HepG2 (cell line): ENCODE measurements at regions of chr16 and their contacts with region 1.

Region 1: DNA sequence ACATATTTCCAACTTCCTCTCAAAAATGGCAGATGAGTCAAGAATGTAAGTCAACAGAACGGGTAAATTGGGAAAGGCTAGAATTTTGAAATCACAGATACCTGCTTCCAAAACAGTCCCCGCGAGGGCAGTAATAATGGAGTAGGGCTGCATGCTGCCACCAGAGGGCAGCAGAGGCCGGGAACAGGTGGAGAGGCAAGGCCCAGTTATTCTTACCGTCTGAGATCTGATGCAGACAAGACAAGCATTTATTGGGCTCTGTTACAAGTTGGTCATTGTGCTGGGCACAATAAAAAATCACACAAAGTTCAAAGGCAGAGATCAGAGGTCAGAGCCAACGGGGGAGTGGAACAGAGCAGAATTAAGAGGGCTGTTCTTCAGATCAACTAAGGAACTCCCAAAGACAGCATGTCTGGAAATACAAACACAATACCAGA is 8.8 kb upstream of the MLKL start:
- DNase-seq: peak; percentile 78
- ATAC-seq: peak; percentile 92
- H3K4me3 ChIP-seq: no peak overlapping the region
- H3K27ac ChIP-seq: no peak overlapping the region
- H3K4me1 ChIP-seq: peaks cover 8% of the 10 kb centered on the region
- H3K27me3 ChIP-seq: peaks cover 6 to 26% of the 10 kb centered on the region in 2 experiments; a peak in 3 of 5 replicates
- CTCF ChIP-seq: peak; percentile 96
- EP300 ChIP-seq: no peak
- POLR2A ChIP-seq: no peak
- RAD21 ChIP-seq: peak; percentile 90

Region 2: DNA sequence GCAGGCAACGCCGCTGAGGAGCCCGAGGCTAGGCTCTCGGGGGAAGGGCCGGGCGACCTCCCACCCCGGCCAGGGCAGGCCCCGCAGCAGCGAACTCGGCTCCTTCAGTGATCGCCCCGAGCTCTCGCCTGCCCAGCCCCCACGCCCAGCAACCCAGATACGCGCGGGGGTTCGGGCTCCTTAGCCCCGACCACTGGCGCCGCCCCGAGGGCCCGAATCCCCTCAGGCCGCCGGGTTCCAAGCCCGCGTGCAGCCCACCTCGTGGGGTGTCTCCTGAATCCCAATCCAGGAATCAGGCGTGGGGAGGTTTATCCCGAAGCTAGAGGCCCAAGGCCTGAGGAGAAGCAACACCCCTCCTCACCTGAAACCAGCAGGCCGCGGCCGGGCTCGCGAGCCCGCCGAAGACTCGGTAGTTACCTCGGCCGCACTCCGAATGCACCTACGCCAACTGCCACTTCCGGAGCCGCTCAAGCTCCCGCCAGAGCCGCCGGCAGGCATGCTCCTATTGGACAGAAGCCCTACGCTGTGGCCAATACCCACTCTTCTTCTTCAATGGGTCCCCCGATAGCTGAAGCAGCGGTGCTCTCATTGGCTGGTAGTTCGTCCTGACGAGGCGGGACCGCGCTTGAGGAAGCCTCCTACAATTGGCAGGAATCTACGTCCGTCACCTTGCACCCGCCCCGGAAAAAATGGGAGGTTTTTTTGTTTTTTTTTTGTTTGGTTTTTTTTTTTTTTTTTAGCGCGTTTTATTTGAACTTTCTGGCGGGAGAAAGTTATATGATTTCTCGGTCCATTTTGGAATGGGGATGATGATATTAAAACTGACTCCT is 42.8 kb before region 1 on chr16 and contains the start of gene RFWD3:
- CTCF ChIA-PET with region 1: no interaction called
- POLR2A ChIA-PET with region 1: no interaction called
- in situ Hi-C with region 1: no loop called
- intact Hi-C with region 1: loop called (anchors 5 kb)
- DNase-seq: peak; percentile 99
- ATAC-seq: peak; percentile 100
- H3K4me3 ChIP-seq: peak within 1 kb of the TSS; percentile 81 to 98 (median 90)
- H3K27ac ChIP-seq: peak within 1 kb of the TSS; percentile 90
- H3K4me1 ChIP-seq: peaks cover 52% of the 10 kb centered on the region
- H3K27me3 ChIP-seq: no peaks in the 10 kb centered on the region
- CTCF ChIP-seq: peak; percentile 21; the same call in 1 of the 2 replicates
- EP300 ChIP-seq: no peak; a peak in 1 of 4 replicates
- POLR2A ChIP-seq: peak; percentile 86 to 98
- RAD21 ChIP-seq: peak; percentile 46; the same call in 1 of the 2 replicates
- total RNA-seq, gene RFWD3: 62.6 and 87.6 TPM in 2 replicates

Region 3: DNA sequence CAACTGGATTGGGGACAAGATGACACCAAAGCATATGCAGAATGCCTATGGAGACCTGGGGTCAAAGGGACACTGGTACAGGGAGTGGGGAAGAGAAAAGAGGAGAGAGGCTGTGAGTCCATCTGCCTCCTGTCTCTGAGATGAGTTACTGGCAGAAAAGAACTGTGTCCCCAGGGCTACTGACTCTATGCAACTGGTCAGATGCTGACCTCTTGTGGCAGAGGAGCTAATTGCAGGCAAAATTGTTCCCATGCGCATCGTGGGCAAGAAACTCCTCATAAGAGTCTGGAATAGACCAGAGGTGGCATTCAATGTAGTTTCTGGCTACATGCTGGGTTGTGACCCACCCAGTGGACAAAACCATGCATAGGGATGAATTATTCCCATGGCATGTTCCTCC is 17.3 kb after region 1 on chr16:
- CTCF ChIA-PET with region 1: interaction called, 23 read pairs
- POLR2A ChIA-PET with region 1: interaction called, 5 read pairs
- in situ Hi-C with region 1: no loop called
- intact Hi-C with region 1: loop called (anchors 1 kb)
- DNase-seq: peak; percentile 50
- ATAC-seq: peak; percentile 33
- H3K4me3 ChIP-seq: no peak overlapping the region
- H3K27ac ChIP-seq: no peak overlapping the region
- H3K4me1 ChIP-seq: peaks cover 28% of the 10 kb centered on the region
- H3K27me3 ChIP-seq: peaks cover 0 to 20% of the 10 kb centered on the region in 2 experiments; a peak in 3 of 5 replicates
- CTCF ChIP-seq: peak; percentile 86
- EP300 ChIP-seq: no peak
- POLR2A ChIP-seq: no peak
- RAD21 ChIP-seq: peak; percentile 49; the same call in 1 of the 2 replicates

Region 4: DNA sequence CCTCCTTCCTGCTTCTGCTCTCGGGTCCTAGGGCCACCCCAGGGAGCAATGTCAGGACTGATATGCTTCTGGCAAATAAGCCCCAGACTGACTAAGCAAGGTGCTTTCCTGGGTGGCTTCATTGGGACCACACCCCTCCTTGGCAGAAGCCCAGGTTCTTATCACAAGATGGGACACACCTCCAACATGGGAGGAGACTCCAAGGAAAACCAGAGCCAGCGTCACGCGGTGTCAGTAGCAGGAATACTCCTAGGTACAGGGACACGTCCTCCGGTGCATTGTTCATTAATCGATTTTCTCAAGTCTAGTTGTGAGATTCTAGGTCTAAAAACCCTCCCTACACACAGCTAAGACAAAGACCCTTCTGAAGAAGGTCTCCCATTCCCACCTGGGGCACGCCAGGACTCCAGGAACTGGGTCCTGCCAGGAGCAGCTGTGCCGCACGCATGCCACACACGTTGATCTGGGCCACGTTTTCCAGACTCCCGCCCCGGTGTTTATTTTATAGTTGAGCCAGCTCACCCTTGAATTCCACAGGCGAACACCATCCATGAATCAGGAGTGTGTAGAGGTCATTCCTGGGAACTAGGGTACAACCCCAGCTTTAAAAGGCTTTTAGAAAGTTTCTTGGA is 34.3 kb after region 1 on chr16:
- CTCF ChIA-PET with region 1: no interaction called
- POLR2A ChIA-PET with region 1: no interaction called
- in situ Hi-C with region 1: no loop called
- intact Hi-C with region 1: no loop called
- DNase-seq: peak; percentile 52
- ATAC-seq: peak; percentile 51
- H3K4me3 ChIP-seq: peak overlapping the region; percentile 12 to 51 (median 41); a peak in 5 of 6 replicates
- H3K27ac ChIP-seq: no peak overlapping the region
- H3K4me1 ChIP-seq: peaks cover 22% of the 10 kb centered on the region
- H3K27me3 ChIP-seq: peaks cover 2 to 53% of the 10 kb centered on the region in 2 experiments; a peak in 4 of 5 replicates
- CTCF ChIP-seq: no peak
- EP300 ChIP-seq: no peak
- POLR2A ChIP-seq: no peak
- RAD21 ChIP-seq: no peak

Region 5: GRCh38 chr16:74813109-74813641 is 103.7 kb after region 1 on chr16:
- CTCF ChIA-PET with region 1: interaction called, 6 read pairs
- POLR2A ChIA-PET with region 1: no interaction called
- in situ Hi-C with region 1: loop called (anchors 10 kb)
- intact Hi-C with region 1: loop called (anchors 1 kb)
- DNase-seq: peak; percentile 81
- ATAC-seq: peak; percentile 99
- H3K4me3 ChIP-seq: peak overlapping the region in 1 of 3 experiments; percentile 34; a peak in 1 of 6 replicates
- H3K27ac ChIP-seq: no peak overlapping the region
- H3K4me1 ChIP-seq: peaks cover 14% of the 10 kb centered on the region
- H3K27me3 ChIP-seq: peaks cover 4 to 22% of the 10 kb centered on the region in 2 experiments; a peak in 3 of 5 replicates
- CTCF ChIP-seq: peak; percentile 100
- EP300 ChIP-seq: no peak
- POLR2A ChIP-seq: no peak
- RAD21 ChIP-seq: peak; percentile 100

Region 6: GRCh38 chr16:74862741-74863244 is 153.3 kb after region 1 on chr16:
- CTCF ChIA-PET with region 1: interaction called, 26 read pairs
- POLR2A ChIA-PET with region 1: no interaction called
- in situ Hi-C with region 1: loop called (anchors 5 kb)
- intact Hi-C with region 1: loop called (anchors 1 kb)
- DNase-seq: peak; percentile 66
- ATAC-seq: peak; percentile 66
- H3K4me3 ChIP-seq: peak overlapping the region; percentile 13 to 40 (median 37); a peak in 3 of 6 replicates
- H3K27ac ChIP-seq: peak overlapping the region; percentile 3
- H3K4me1 ChIP-seq: peaks cover 33% of the 10 kb centered on the region
- H3K27me3 ChIP-seq: peaks cover 0 to 6% of the 10 kb centered on the region in 2 experiments; a peak in 4 of 5 replicates
- CTCF ChIP-seq: peak; percentile 90
- EP300 ChIP-seq: no peak
- POLR2A ChIP-seq: no peak
- RAD21 ChIP-seq: peak; percentile 81